Psoas muscle (tissue), 8 donors: ENCODE measurements at regions of chr5 and their contacts with region 1.

Region 1: GRCh38 chr5:57887851-57888621 is 405.4 kb upstream of the ACTBL2 start:
- DNase-seq: no peak
- ATAC-seq: peak; percentile 72 to 93 (median 84)
- H3K4me3 ChIP-seq: no peak overlapping the region
- H3K27ac ChIP-seq: no peak overlapping the region
- H3K4me1 ChIP-seq: no peaks in the 10 kb centered on the region
- H3K27me3 ChIP-seq: no peaks in the 10 kb centered on the region
- CTCF ChIP-seq: peak; percentile 76

Region 2: GRCh38 chr5:57499262-57500050 is 388.6 kb before region 1 on chr5:
- intact Hi-C with region 1: loop called in 1 of 2 experiments (anchors 5 kb)
- DNase-seq: no peak
- ATAC-seq: peak; percentile 49 to 83 (median 64)
- H3K4me3 ChIP-seq: peak overlapping the region; percentile 31
- H3K27ac ChIP-seq: no peak overlapping the region
- H3K4me1 ChIP-seq: peaks cover 13% of the 10 kb centered on the region
- H3K27me3 ChIP-seq: no peaks in the 10 kb centered on the region
- CTCF ChIP-seq: peak; percentile 76

Region 3: GRCh38 chr5:57779383-57780223 is 108.4 kb before region 1 on chr5:
- intact Hi-C with region 1: loop called (anchors 2 to 10 kb)
- DNase-seq: no peak
- ATAC-seq: peak; percentile 82 to 92 (median 83)
- H3K4me3 ChIP-seq: no peak overlapping the region
- H3K27ac ChIP-seq: no peak overlapping the region
- H3K4me1 ChIP-seq: peaks cover 23% of the 10 kb centered on the region
- H3K27me3 ChIP-seq: no peaks in the 10 kb centered on the region
- CTCF ChIP-seq: peak; percentile 70

Region 4: DNA sequence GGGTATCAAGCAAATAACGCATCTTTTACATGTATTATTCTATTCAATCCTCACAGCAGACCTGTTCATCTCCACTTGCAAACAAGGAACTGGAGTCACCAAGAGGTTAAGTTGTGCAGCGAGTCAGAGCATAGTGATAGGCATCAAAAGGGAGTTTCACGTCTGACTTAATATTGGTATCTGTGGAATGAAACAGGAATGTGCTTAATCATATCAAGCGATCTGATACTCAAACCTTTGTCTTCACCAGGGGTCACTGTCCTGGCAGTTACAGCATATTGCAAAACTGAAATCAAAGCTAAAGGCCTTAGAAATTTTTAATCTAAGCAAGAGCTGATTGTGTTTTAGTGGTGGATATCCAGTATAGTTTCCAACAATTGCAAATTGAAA is 300.2 kb after region 1 on chr5:
- intact Hi-C with region 1: loop called in 1 of 2 experiments (anchors 5 kb)
- DNase-seq: no peak
- ATAC-seq: peak in 3 of 4 donors; percentile 27 to 46 (median 27)
- H3K4me3 ChIP-seq: no peak overlapping the region
- H3K27ac ChIP-seq: no peak overlapping the region
- H3K4me1 ChIP-seq: peaks cover 6% of the 10 kb centered on the region
- H3K27me3 ChIP-seq: no peaks in the 10 kb centered on the region
- CTCF ChIP-seq: no peak